ENCODE measurements at regions of chr2 and their contacts with region 1.

Region 1: DNA sequence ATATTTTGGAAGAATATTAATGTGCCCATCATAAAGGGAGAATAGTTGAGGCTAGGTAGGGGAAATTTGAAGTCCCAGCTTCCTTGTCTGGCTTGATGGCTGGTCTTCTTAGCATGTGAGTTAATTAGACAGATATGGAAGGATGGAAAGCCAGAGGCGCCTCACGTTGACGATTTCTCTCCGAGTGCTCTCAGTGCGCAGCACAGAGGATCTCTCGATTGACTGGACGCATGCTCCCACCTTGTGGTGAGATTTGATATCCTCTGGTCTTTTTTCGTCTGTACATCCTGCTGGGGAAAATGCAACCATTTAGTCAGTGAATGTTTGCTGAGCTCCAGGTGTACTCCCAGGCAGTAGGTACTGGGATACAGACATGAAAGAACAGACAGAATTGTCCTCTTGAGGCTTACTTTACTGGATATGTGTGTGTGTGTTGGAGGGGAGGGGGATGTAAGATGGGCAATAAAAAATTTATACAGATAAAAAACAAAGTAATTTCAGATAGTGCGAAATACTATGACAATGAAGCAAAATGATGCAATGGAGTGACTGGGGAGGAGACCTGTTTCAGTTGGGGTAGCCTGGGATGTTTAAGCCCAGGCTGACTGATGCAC is 66.9 kb upstream of the ZNG1B start:
- DNase-seq: peak; percentile 80
- ATAC-seq: peak; percentile 99
- H3K4me3 ChIP-seq: no peak overlapping the region
- H3K27ac ChIP-seq: no peak overlapping the region
- H3K4me1 ChIP-seq: peaks cover 8% of the 10 kb centered on the region
- H3K27me3 ChIP-seq: no peaks in the 10 kb centered on the region
- CTCF ChIP-seq: peak; percentile 94
- EP300 ChIP-seq: no peak
- POLR2A ChIP-seq: no peak
- RAD21 ChIP-seq: peak; percentile 95

Region 2: GRCh38 chr2:113080134-113080533 is 290.5 kb before region 1 on chr2:
- CTCF ChIA-PET with region 1: no interaction called
- POLR2A ChIA-PET with region 1: no interaction called
- in situ Hi-C with region 1: loop called (anchors 10 kb)
- intact Hi-C with region 1: loop called (anchors 1 kb)
- DNase-seq: peak; percentile 40
- ATAC-seq: peak; percentile 93
- H3K4me3 ChIP-seq: no peak overlapping the region
- H3K27ac ChIP-seq: no peak overlapping the region
- H3K4me1 ChIP-seq: peaks cover 14% of the 10 kb centered on the region; the same call in 1 of the 2 replicates
- H3K27me3 ChIP-seq: peaks cover 0 to 10% of the 10 kb centered on the region in 2 experiments; a peak in 2 of 5 replicates
- CTCF ChIP-seq: peak; percentile 98
- EP300 ChIP-seq: no peak
- POLR2A ChIP-seq: no peak
- RAD21 ChIP-seq: peak; percentile 91

Region 3: DNA sequence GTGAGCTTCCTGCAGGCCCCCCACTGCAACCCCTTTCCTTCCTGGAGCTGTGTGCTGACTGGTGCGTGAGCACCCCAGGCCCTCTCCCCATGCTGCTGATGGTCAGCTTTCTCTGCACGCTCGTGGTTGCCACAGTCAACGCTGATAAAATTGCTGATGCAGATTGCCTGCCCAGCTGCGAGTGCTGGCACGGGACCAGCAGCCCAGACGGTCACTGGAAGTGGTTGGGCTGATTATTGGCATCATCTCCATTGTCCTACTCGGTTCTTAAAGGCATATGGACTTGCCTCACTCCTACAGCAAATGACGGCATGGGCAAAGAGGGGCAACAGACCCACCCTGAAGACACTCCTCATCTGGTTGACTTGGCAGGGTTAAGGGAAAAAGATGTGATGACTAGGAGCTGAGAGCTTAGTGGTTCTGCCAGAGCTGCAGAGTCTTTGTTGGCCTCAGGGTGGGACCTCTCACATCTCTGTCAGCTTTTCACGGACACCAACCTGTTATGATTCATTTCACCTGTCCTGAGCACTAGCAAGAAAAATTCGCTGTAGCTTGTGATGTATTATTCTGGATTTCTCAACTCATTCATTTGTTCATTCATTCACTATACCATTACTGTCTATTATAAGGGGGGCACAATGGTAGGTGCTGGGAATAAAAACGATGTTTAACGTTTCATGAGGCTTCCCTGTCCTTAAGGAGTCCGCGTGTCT is 130.3 kb before region 1 on chr2:
- CTCF ChIA-PET with region 1: no interaction called
- POLR2A ChIA-PET with region 1: interaction called, 5 read pairs
- in situ Hi-C with region 1: no loop called
- intact Hi-C with region 1: loop called (anchors 1 kb)
- DNase-seq: no peak
- ATAC-seq: peak; percentile 31
- H3K4me3 ChIP-seq: 0 out of 6 replicates have a peak overlapping the region, but pooled peaks of 1 of the 3 experiments have one; percentile 23
- H3K27ac ChIP-seq: no peak overlapping the region
- H3K4me1 ChIP-seq: peaks cover 68% of the 10 kb centered on the region
- H3K27me3 ChIP-seq: no peaks in the 10 kb centered on the region; a peak in 1 of 5 replicates
- CTCF ChIP-seq: no peak
- EP300 ChIP-seq: no peak
- POLR2A ChIP-seq: no peak
- RAD21 ChIP-seq: no peak

Region 4: DNA sequence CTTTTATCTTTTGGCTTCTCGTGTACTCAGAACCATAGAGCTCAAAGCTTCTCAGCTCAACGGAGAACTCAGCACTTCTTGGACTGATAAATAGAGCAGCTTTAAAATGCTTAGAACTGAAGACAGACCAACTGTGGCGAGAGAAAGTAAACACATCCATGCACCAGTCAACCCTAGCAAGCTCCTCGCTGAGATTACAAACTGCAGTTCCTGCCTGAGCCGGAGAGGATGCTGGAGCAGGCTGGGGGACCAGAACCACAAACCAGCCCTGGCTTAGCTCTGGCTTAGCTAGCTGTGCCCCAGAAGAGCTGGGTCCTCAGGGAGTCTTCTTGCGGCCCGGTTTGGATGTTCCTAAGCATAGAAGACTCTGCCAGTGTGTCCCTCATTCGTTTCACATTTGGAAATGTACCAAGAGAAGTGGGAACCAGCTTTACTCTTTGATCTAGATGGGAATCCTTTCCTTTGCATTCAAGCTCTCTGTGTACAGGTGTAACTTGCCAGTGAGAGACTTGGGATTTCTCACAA is 97.5 kb before region 1 on chr2:
- CTCF ChIA-PET with region 1: no interaction called
- POLR2A ChIA-PET with region 1: no interaction called
- in situ Hi-C with region 1: loop called (anchors 25 kb)
- intact Hi-C with region 1: no loop called
- DNase-seq: peak; percentile 28
- ATAC-seq: peak; percentile 99
- H3K4me3 ChIP-seq: no peak overlapping the region; a peak in 1 of 6 replicates
- H3K27ac ChIP-seq: no peak overlapping the region
- H3K4me1 ChIP-seq: peaks cover 10% of the 10 kb centered on the region; the same call in 1 of the 2 replicates
- H3K27me3 ChIP-seq: peaks cover 1 to 15% of the 10 kb centered on the region in 2 experiments; a peak in 4 of 5 replicates
- CTCF ChIP-seq: peak; percentile 31; the same call in 1 of the 2 replicates
- EP300 ChIP-seq: no peak
- POLR2A ChIP-seq: no peak
- RAD21 ChIP-seq: no peak

Region 5: GRCh38 chr2:113382476-113382875 is 11.9 kb after region 1 on chr2:
- CTCF ChIA-PET with region 1: no interaction called
- POLR2A ChIA-PET with region 1: no interaction called
- in situ Hi-C with region 1: no loop called
- intact Hi-C with region 1: no loop called
- DNase-seq: no peak
- ATAC-seq: no peak
- H3K4me3 ChIP-seq: no peak overlapping the region
- H3K27ac ChIP-seq: no peak overlapping the region
- H3K4me1 ChIP-seq: no peaks in the 10 kb centered on the region
- H3K27me3 ChIP-seq: no peaks in the 10 kb centered on the region
- CTCF ChIP-seq: no peak
- EP300 ChIP-seq: no peak
- POLR2A ChIP-seq: no peak
- RAD21 ChIP-seq: no peak

Measured in HepG2 (cell line).